Naive thymus-derived CD4-positive, alpha-beta T cell (primary cell): ENCODE measurements at regions of chr13 and their contacts with region 1.

Region 1: DNA sequence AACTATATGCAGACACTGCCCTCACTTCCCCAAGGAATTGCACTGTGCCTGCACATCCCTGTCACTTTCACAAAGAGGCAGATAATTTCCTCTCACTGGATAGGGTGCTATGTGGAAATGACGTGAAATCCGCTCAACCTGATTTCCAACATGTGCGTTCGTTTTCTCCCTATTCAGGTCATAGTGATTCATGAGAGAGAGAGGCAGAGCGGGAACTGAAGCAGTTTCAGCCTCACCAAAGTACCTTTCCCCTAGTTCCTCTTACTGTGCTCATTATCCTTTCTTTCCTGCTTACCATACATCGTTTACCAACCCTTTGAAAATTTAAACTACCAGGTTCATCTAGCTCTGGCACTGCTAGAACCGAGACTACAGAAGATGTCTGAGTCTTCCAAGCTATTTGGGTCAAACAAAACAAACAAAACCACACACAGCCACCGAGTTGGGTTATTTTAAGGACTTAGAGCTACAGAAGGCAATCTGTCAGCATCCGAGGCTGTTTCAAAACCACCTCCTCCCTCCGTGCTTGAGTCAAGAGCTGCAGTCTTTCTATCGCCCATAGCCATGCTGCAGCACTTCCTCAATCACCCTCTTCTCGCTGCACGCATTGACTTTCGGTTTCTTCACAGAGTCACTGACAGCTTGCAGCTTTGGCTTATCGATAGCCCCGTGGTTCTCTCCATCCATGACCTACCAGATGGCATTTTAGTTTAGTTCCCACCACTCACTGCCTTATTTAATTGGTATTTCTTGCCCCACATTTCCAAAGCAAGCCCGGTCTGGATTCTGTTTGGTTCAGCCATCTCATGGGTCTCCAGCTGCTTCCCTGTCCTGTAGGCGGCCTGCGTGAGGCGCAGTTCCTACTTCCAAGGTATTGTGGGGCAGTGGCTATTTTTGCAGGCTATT is 1395.8 kb downstream of the EFNB2 start:
- DNase-seq: peak; percentile 16 to 76 (median 66)
- ATAC-seq: peak; percentile 93
- H3K4me3 ChIP-seq: peak overlapping the region; percentile 63
- H3K4me3 Mint-ChIP-seq: peak overlapping the region; percentile 85 to 98 (median 94)
- H3K27ac ChIP-seq: peak overlapping the region; percentile 74
- H3K27ac Mint-ChIP-seq: peak overlapping the region; percentile 94 to 99 (median 96)
- H3K4me1 ChIP-seq: peaks cover 0 to 5% of the 10 kb centered on the region in 2 donors
- H3K4me1 Mint-ChIP-seq: peaks cover 5 to 22% (median 17%) of the 10 kb centered on the region in 7 donors
- H3K27me3 ChIP-seq: no peaks in the 10 kb centered on the region
- H3K27me3 Mint-ChIP-seq: peaks cover 0 to 5% (median 0%) of the 10 kb centered on the region in 5 donors

Region 2: GRCh38 chr13:104984296-104984818 is 155.3 kb before region 1 on chr13:
- CTCF ChIA-PET with region 1: no interaction called
- POLR2A ChIA-PET with region 1: no interaction called
- intact Hi-C with region 1: loop called in 1 of 2 experiments (anchors 5 kb)
- DNase-seq: peak in 6 of 9 donors; percentile 30 to 65 (median 42)
- ATAC-seq: peak; percentile 82
- H3K4me3 ChIP-seq: no peak overlapping the region
- H3K4me3 Mint-ChIP-seq: peak overlapping the region; percentile 4 to 75 (median 62)
- H3K27ac ChIP-seq: peak overlapping the region; percentile 33
- H3K27ac Mint-ChIP-seq: peak overlapping the region; percentile 45 to 90 (median 73)
- H3K4me1 ChIP-seq: peaks cover 0 to 8% of the 10 kb centered on the region in 2 donors
- H3K4me1 Mint-ChIP-seq: peaks cover 13 to 38% (median 26%) of the 10 kb centered on the region in 7 donors
- H3K27me3 ChIP-seq: no peaks in the 10 kb centered on the region
- H3K27me3 Mint-ChIP-seq: no peaks in the 10 kb centered on the region

Region 3: GRCh38 chr13:105202354-105202753 is 62.7 kb after region 1 on chr13:
- CTCF ChIA-PET with region 1: no interaction called
- POLR2A ChIA-PET with region 1: no interaction called
- intact Hi-C with region 1: loop called in 1 of 2 experiments (anchors 5 kb)
- DNase-seq: peak in 2 of 9 donors; percentile 1 to 19
- ATAC-seq: no peak
- H3K4me3 ChIP-seq: no peak overlapping the region
- H3K4me3 Mint-ChIP-seq: no peak overlapping the region
- H3K27ac ChIP-seq: no peak overlapping the region
- H3K27ac Mint-ChIP-seq: no peak overlapping the region
- H3K4me1 ChIP-seq: no peaks in the 10 kb centered on the region
- H3K4me1 Mint-ChIP-seq: no peaks in the 10 kb centered on the region
- H3K27me3 ChIP-seq: no peaks in the 10 kb centered on the region
- H3K27me3 Mint-ChIP-seq: peaks cover 0 to 27% (median 11%) of the 10 kb centered on the region in 5 donors

Region 4: GRCh38 chr13:106917673-106918556 is 1778.3 kb after region 1 on chr13:
- CTCF ChIA-PET with region 1: no interaction called
- POLR2A ChIA-PET with region 1: no interaction called
- intact Hi-C with region 1: loop called in 1 of 2 experiments (anchors 5 kb)
- DNase-seq: peak; percentile 29 to 79 (median 61)
- ATAC-seq: peak; percentile 91
- H3K4me3 ChIP-seq: peak overlapping the region; percentile 73
- H3K4me3 Mint-ChIP-seq: peak overlapping the region; percentile 68 to 86 (median 77)
- H3K27ac ChIP-seq: no peak overlapping the region
- H3K27ac Mint-ChIP-seq: peak overlapping the region in 5 of 9 donors; percentile 31 to 67 (median 55)
- H3K4me1 ChIP-seq: peaks cover 0 to 6% of the 10 kb centered on the region in 2 donors
- H3K4me1 Mint-ChIP-seq: peaks cover 0 to 21% (median 8%) of the 10 kb centered on the region in 7 donors
- H3K27me3 ChIP-seq: no peaks in the 10 kb centered on the region
- H3K27me3 Mint-ChIP-seq: peaks cover 25 to 37% (median 36%) of the 10 kb centered on the region in 5 donors